H1 (cell line): ENCODE measurements at regions of chr18 and their contacts with region 1.

Region 1: GRCh38 chr18:27599202-27599829 is 414.2 kb upstream of the CHST9 start:
- DNase-seq: peak in 1 of 2 experiments; percentile 68
- H3K4me3 ChIP-seq: no peak overlapping the region
- H3K27ac ChIP-seq: no peak overlapping the region
- H3K4me1 ChIP-seq: peaks cover 0 to 3% (median 0%) of the 10 kb centered on the region in 4 experiments; a peak in 2 of 7 replicates
- H3K27me3 ChIP-seq: no peaks in the 10 kb centered on the region
- CTCF ChIP-seq: peak; percentile 71 to 94 (median 81)
- EP300 ChIP-seq: no peak
- POLR2A ChIP-seq: no peak
- RAD21 ChIP-seq: peak; percentile 92 to 94

Region 2: DNA sequence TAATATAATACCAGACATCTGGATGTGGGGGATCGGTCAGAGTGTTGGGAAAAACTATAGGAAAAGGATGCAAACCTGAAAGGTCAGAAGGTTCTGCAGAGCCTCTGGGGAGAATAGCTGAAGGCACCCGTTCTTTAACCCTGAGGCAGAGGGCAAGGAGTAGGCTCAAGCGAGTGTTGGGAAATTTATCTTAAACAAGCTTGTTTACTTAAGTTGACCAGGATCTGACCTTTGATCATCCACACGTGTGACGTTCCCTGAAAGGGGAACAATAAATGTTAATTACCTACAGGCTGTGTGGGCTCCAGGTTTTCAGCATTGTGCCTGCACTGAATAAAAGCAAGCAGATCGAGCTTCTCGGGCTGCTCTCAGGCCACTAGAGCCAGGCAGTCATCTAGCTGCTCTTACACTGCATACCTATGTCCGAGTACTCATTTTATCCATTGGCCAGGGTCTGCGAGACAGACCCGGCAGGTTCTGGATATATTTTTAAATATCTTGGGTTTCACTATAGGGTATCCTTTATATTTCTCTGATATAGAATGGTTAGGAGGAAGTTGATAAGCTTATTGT is 13.6 kb before region 1 on chr18:
- CTCF ChIA-PET with region 1: interaction called, 10 read pairs
- POLR2A ChIA-PET with region 1: no interaction called
- DNase-seq: no peak
- H3K4me3 ChIP-seq: no peak overlapping the region
- H3K27ac ChIP-seq: no peak overlapping the region
- H3K4me1 ChIP-seq: no peaks in the 10 kb centered on the region; a peak in 1 of 7 replicates
- H3K27me3 ChIP-seq: no peaks in the 10 kb centered on the region
- CTCF ChIP-seq: no peak
- EP300 ChIP-seq: no peak
- POLR2A ChIP-seq: no peak
- RAD21 ChIP-seq: no peak